ENCODE measurements at regions of chr6 and their contacts with region 1.

Region 1: GRCh38 chr6:42782622-42783176 is 847 bp downstream of the BICRAL start:
- DNase-seq: peak; percentile 81 to 83
- H3K4me3 ChIP-seq: peak overlapping the region; percentile 87 to 98
- H3K27ac ChIP-seq: peak overlapping the region; percentile 99 to 100
- H3K4me1 ChIP-seq: no peaks in the 10 kb centered on the region
- H3K27me3 ChIP-seq: no peaks in the 10 kb centered on the region
- CTCF ChIP-seq: no peak
- POLR2A ChIP-seq: peak; percentile 7 to 79

Region 2: GRCh38 chr6:42690151-42690702 is 92.5 kb before region 1 on chr6:
- intact Hi-C with region 1: no loop called
- DNase-seq: no peak
- H3K4me3 ChIP-seq: no peak overlapping the region
- H3K27ac ChIP-seq: peak overlapping the region in 1 of 2 donors; percentile 14
- H3K4me1 ChIP-seq: no peaks in the 10 kb centered on the region
- H3K27me3 ChIP-seq: no peaks in the 10 kb centered on the region
- CTCF ChIP-seq: no peak
- POLR2A ChIP-seq: no peak

Region 3: DNA sequence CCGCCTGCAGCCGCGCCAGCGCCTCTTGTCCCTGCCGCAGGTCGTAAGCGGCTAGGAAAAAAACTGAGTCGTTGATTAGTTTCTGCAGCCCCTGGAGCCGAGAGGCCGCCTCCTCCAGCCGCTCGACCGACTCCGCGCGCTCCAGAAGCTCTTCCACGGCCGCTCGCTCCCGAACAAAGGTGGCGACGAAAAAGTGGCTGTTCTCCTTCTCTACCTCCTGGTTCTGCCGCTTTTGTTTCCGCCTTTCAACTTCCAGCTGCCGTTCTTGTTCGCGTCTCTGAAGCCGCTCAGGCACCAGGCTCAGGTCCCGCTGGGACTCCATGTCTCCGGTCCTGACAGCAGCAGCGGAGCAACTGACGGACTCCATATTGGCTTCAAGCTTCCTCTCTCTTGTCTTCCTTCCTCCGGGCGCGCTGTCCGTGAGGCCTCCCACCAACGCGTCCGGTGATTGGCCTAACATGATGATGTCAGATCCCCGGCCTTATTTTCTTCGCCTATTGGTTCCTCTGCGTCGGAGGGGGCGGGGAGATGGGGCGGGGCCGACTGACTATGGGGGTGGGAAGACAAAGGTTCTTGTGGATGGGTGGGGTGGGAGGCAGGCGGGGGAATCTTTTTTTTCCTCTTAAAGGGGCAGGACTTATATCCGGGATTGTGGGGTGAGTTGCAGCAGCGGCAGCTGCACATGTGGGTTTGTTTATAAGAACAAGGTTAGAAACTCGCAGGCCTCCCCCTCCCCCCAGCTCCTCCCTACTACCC is 36.8 kb before region 1 on chr6 and contains the start of gene TBCC:
- intact Hi-C with region 1: loop called (anchors 5 kb)
- DNase-seq: peak; percentile 94 to 96
- H3K4me3 ChIP-seq: peak within 1 kb of the TSS; percentile 80 to 97
- H3K27ac ChIP-seq: peak within 1 kb of the TSS; percentile 98
- H3K4me1 ChIP-seq: peaks cover 0 to 9% of the 10 kb centered on the region in 2 donors
- H3K27me3 ChIP-seq: no peaks in the 10 kb centered on the region
- CTCF ChIP-seq: peak in 1 of 4 experiments; percentile 4
- POLR2A ChIP-seq: peak; percentile 91 to 94
- total RNA-seq, gene TBCC: 7.9 to 48.7 (median 14.6) TPM

Measured in uterus (tissue), 4 donors.